ENCODE measurements at regions of chr15 and their contacts with region 1.

Region 1: GRCh38 chr15:44137750-44138149 is 57.3 kb downstream of the FRMD5 start:
- DNase-seq: no peak
- ATAC-seq: no peak
- H3K4me3 ChIP-seq: no peak overlapping the region
- H3K27ac ChIP-seq: no peak overlapping the region
- H3K4me1 ChIP-seq: no peaks in the 10 kb centered on the region
- H3K27me3 ChIP-seq: no peaks in the 10 kb centered on the region
- CTCF ChIP-seq: no peak
- EP300 ChIP-seq: no peak
- POLR2A ChIP-seq: no peak
- RAD21 ChIP-seq: no peak

Region 2: GRCh38 chr15:43939070-43939469 is 198.7 kb before region 1 on chr15:
- CTCF ChIA-PET with region 1: no interaction called
- POLR2A ChIA-PET with region 1: no interaction called
- in situ Hi-C with region 1: no loop called
- intact Hi-C with region 1: loop called (anchors 5 kb)
- DNase-seq: no peak
- ATAC-seq: no peak
- H3K4me3 ChIP-seq: no peak overlapping the region
- H3K27ac ChIP-seq: no peak overlapping the region
- H3K4me1 ChIP-seq: no peaks in the 10 kb centered on the region
- H3K27me3 ChIP-seq: no peaks in the 10 kb centered on the region
- CTCF ChIP-seq: 0 out of 2 replicates have a peak, but pooled peaks have one; percentile 13
- EP300 ChIP-seq: no peak
- POLR2A ChIP-seq: no peak
- RAD21 ChIP-seq: no peak

Region 3: DNA sequence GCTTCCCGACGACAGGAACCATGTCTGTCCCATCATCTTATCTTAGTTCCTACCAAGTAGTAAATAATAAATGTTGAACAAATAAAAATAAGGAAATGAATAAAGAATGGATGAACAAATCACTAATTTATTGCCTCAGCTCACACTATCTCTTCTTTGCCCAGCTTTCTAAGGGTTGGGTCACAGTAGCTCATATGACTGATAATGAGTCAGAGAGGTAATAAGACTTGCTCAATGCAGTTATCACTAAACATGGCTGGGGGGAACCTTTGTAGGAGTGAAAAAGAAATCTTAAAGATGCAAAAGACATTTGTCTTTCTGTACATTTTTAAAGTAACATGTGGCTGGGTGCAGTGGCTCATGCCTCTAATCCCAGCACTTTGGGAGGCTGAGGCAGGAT is 128.7 kb before region 1 on chr15:
- CTCF ChIA-PET with region 1: no interaction called
- POLR2A ChIA-PET with region 1: no interaction called
- in situ Hi-C with region 1: no loop called
- intact Hi-C with region 1: no loop called
- DNase-seq: no peak
- ATAC-seq: no peak
- H3K4me3 ChIP-seq: no peak overlapping the region
- H3K27ac ChIP-seq: no peak overlapping the region
- H3K4me1 ChIP-seq: no peaks in the 10 kb centered on the region
- H3K27me3 ChIP-seq: no peaks in the 10 kb centered on the region
- CTCF ChIP-seq: no peak
- EP300 ChIP-seq: no peak
- POLR2A ChIP-seq: no peak
- RAD21 ChIP-seq: no peak

Region 4: DNA sequence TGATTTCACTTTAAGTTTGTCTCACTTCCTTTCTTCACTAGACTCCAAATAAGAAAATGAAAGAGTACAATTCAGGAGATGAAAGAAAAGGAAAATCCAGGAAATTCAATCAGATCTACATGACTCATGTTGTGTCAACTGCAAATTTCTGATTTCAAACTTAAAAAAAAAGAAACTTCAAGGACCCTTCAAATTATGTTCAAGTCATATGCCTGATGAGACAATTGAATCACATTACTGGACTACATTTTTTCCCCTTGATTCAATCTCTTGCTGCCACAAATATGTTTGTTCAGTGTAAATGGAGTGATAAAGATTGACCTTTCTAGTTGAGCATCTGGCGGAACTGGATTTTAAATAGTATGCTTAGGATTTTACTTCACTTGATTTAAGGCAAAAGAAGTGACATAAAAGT is 19.9 kb after region 1 on chr15:
- CTCF ChIA-PET with region 1: no interaction called
- POLR2A ChIA-PET with region 1: no interaction called
- in situ Hi-C with region 1: no loop called
- intact Hi-C with region 1: no loop called
- DNase-seq: peak; percentile 76
- ATAC-seq: no peak
- H3K4me3 ChIP-seq: no peak overlapping the region
- H3K27ac ChIP-seq: no peak overlapping the region
- H3K4me1 ChIP-seq: no peaks in the 10 kb centered on the region
- H3K27me3 ChIP-seq: no peaks in the 10 kb centered on the region
- CTCF ChIP-seq: no peak
- EP300 ChIP-seq: peak in 1 of 2 experiments; percentile 38; a peak in 1 of 4 replicates
- POLR2A ChIP-seq: no peak
- RAD21 ChIP-seq: no peak

Region 5: GRCh38 chr15:44319385-44319784 is 181.6 kb after region 1 on chr15:
- CTCF ChIA-PET with region 1: no interaction called
- POLR2A ChIA-PET with region 1: no interaction called
- in situ Hi-C with region 1: no loop called
- intact Hi-C with region 1: no loop called
- DNase-seq: no peak
- ATAC-seq: no peak
- H3K4me3 ChIP-seq: no peak overlapping the region
- H3K27ac ChIP-seq: no peak overlapping the region
- H3K4me1 ChIP-seq: no peaks in the 10 kb centered on the region
- H3K27me3 ChIP-seq: no peaks in the 10 kb centered on the region
- CTCF ChIP-seq: no peak
- EP300 ChIP-seq: no peak
- POLR2A ChIP-seq: no peak
- RAD21 ChIP-seq: no peak

Measured in HepG2 (cell line).